Posterior vena cava (tissue), 2 donors: ENCODE measurements at regions of chr1 and their contacts with region 1.

Region 1: GRCh38 chr1:3856908-3857790 is at the starts of genes CEP104 and DFFB:
- DNase-seq: peak; percentile 95
- total RNA-seq, gene CEP104: 40.1 to 57.9 TPM
- total RNA-seq, gene DFFB: 4.8 to 5.2 TPM

Region 2: DNA sequence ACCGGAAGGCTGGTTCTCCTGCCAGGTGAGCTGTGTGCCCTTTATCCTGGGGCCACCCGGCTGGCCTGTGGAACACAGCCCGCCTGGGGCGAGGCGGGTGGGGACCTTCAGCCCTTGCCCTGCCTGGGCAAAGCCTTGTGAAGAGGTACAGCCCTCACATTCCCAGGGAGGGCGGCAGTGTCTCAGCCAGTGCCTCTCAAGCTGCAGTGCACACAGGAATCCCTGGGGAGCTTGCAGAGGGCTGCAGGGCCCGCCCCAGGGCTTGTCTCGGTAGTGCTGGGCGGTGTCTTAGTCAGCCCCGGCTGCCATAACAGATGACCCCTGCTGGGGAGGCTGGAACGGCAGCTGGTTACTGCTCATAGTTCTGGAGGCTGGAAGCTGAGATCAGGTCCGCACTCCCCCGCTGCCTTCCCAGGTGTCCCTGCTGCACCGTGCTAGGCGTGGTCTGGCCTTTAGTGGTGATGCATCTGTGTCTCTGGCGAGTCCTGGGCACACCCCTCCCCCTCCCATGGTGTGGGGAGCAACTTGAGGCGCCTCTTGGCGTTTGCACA is 12.7 kb after region 1 on chr1:
- intact Hi-C with region 1: no loop called
- DNase-seq: no peak

Region 3: DNA sequence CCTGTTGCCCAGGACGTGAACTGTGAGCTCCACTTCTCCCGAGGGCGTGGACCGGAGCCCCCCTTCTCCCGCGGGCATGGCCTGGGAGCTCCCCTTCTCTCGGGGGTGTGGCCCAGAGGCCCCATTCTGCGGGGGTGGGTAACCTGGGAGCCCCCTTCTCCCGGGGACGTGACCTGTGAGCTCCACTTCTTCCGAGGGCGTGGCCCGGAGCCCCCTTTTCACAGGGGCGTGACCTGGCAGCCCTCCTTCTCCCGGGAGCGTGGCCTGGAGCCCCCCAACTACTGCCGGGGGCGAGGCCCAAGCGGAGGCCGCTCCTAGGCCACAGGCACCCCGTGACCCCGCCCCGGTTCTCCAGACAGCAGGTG is 42.6 kb after region 1 on chr1:
- intact Hi-C with region 1: loop called in 1 of 2 experiments (anchors 1 kb)
- DNase-seq: no peak

Region 4: DNA sequence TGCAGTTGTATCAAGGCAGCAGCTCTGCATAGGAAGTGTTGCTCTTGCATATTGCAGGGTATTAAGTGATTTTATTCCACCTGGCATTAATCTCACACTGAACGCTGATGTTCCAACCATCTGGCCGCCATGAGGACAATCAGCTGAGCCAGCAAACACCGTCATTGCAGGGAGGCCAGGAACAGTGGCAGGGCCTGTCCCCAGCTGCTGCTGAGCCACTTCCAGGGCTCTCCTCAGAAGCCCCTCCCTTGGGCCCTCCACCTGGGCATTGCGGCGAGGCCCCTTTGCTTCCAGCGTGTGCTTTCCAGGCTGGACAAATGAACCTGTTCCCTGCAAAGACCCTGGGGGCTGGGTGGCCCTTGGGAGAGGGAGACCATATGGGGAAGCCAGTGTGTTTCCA is 214.5 kb after region 1 on chr1:
- intact Hi-C with region 1: no loop called
- DNase-seq: no peak